Activated T-helper 1 cell treated with anti-CD3 and anti-CD28 coated beads, Interleukin-12 subunit alpha, Interleukin-12 subunit beta, Interleukin-2, Interleukin-4 antibody, amounts not matched to agents 30 ng/mL and 10 ng/mL and 1 ng/mL, durations not matched to agents 14 hours and 24 hours and 36 hours (primary cell): ENCODE measurements at regions of chr3 and their contacts with region 1.

Region 1: DNA sequence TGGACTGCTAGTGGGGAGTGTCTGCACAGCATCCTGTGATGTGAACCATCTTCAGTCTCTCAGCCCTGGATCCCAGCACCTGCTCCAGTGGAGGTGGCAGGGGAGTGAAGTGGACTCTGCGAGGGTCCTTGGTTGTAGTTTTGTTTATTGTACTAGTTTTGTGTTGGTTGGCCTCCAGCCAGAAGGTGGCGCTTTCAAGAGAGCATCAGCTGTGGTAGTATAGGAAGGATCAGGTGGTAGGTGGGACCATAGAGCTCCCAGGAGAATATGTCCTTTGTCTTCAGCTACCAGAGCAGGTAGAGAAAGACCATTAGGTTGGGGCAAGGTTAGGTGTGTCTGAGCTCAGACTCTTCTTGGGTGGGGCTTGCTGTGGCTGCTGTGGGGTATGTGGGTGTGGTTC is 20.9 kb downstream of the NEK11 start:
- DNase-seq: no peak
- H3K4me3 Mint-ChIP-seq: no peak overlapping the region
- H3K27ac Mint-ChIP-seq: no peak overlapping the region
- H3K4me1 Mint-ChIP-seq: peaks cover 10% of the 10 kb centered on the region
- H3K27me3 Mint-ChIP-seq: peaks cover 16% of the 10 kb centered on the region

Region 2: GRCh38 chr3:130892759-130893375 is 154.7 kb before region 1 on chr3:
- intact Hi-C with region 1: no loop called
- DNase-seq: peak; percentile 59
- H3K4me3 Mint-ChIP-seq: peak overlapping the region; percentile 92
- H3K27ac Mint-ChIP-seq: peak overlapping the region; percentile 96
- H3K4me1 Mint-ChIP-seq: peaks cover 48% of the 10 kb centered on the region
- H3K27me3 Mint-ChIP-seq: no peaks in the 10 kb centered on the region

Region 3: DNA sequence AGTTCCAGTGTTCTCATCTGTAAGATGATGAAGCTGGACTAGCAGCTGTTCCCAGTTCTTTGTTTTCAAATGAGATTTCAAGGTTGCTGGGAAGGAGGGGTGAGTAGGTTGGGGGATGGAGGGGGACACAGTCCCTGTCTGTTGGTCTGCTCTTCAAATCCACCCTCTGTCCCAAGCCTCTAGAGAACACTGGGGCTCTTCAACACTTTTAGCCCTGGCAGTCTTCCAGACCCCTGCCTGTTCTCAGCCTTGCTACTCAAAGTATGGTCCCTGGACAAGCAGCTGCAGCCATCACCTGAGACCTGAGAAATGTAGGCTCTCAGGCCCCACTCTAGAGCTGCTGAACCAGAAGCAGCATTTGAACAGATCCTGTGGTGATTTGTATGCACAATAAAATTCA is 20.4 kb after region 1 on chr3:
- intact Hi-C with region 1: loop called (anchors 1 kb)
- DNase-seq: no peak
- H3K4me3 Mint-ChIP-seq: no peak overlapping the region
- H3K27ac Mint-ChIP-seq: no peak overlapping the region
- H3K4me1 Mint-ChIP-seq: peaks cover 7% of the 10 kb centered on the region
- H3K27me3 Mint-ChIP-seq: peaks cover 13% of the 10 kb centered on the region

Region 4: GRCh38 chr3:131403216-131403895 is 355.8 kb after region 1 on chr3:
- intact Hi-C with region 1: no loop called
- DNase-seq: no peak
- H3K4me3 Mint-ChIP-seq: no peak overlapping the region
- H3K27ac Mint-ChIP-seq: no peak overlapping the region
- H3K4me1 Mint-ChIP-seq: no peaks in the 10 kb centered on the region
- H3K27me3 Mint-ChIP-seq: no peaks in the 10 kb centered on the region